GM18951 (cell line): ENCODE measurements at regions of chr2 and their contacts with region 1.

Region 1: GRCh38 chr2:21042958-21043743 is 722 bp downstream of the APOB start:
- POLR2A ChIP-seq: no peak

Region 2: DNA sequence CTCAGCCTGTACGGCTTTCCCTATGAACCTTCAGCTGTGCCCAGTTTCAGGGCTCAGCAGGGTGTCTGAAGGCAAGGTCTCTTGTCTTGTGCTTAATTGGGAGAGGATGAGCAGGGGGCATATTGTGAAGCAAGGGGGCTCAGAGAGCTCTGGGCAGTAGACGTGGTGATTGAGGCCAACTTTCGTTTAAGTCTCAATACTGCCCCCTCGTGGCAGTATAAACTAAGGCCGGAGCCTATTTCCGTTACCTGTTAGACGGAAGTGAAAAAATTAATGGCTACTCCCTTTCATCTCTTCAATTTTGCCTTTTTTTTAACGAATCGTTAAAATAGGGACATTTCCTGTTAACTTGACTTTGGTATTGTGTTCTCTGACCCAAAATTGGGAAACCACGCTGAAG is 274.0 kb after region 1 on chr2:
- in situ Hi-C with region 1: loop called (anchors 25 kb)
- POLR2A ChIP-seq: no peak